ENCODE measurements at regions of chr11 and their contacts with region 1.

Region 1: GRCh38 chr11:128290106-128290840 is 297.1 kb downstream of the ETS1 start:
- DNase-seq: peak; percentile 51 to 93 (median 66)
- ATAC-seq: peak; percentile 73
- H3K4me3 ChIP-seq: peak overlapping the region; percentile 50
- H3K4me3 Mint-ChIP-seq: peak overlapping the region; percentile 90
- H3K27ac ChIP-seq: peak overlapping the region; percentile 87 to 95
- H3K27ac Mint-ChIP-seq: peak overlapping the region; percentile 100
- H3K4me1 ChIP-seq: peaks cover 77% of the 10 kb centered on the region
- H3K4me1 Mint-ChIP-seq: peaks cover 100% of the 10 kb centered on the region
- H3K27me3 ChIP-seq: no peaks in the 10 kb centered on the region
- H3K27me3 Mint-ChIP-seq: no peaks in the 10 kb centered on the region
- CTCF ChIP-seq: peak; percentile 94

Region 2: DNA sequence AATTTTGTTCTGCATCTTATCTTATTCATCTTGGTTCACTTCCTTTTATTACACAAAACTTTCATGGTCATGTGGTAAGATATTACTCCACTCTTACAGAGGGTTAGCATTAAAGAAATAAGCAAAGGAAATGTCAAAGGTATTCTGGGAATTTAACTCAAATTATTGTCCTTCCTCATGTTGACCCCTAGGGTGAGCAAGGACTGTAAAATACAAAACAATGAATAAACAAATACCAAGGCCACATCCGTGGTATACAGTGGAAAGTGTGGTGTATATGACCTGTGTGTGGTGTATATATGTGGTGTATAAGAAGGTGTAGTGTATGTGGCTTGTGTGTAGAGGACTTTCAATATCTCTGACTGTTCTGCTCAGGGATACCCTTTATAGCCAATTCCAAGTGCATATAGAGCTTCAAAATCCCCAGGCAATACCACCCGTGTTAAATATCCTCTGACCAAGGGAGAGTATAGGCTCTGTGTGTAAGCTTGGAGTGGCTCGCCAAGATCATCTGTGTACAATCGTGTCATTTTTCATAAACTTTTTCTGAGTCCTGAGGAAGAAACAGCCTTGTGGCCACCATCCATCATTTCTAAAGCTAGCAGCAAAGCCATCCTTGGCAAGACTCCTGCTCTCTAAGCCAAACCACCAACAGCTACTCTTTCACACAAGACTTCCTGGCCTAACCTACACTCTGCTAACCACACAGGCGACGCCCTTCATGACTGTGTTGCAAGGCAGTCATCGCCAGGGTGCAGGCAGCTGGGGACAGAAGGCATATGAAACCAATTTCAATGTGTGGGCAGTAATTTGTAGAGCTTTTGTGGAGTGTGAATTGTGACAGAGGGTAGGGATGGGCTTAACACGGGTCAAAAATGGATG is 250.9 kb before region 1 on chr11:
- CTCF ChIA-PET with region 1: no interaction called
- POLR2A ChIA-PET with region 1: no interaction called
- intact Hi-C with region 1: loop called (anchors 5 kb)
- DNase-seq: peak; percentile 55 to 94 (median 72)
- ATAC-seq: peak; percentile 96
- H3K4me3 ChIP-seq: peak overlapping the region; percentile 47
- H3K4me3 Mint-ChIP-seq: peak overlapping the region; percentile 72
- H3K27ac ChIP-seq: peak overlapping the region; percentile 29 to 50
- H3K27ac Mint-ChIP-seq: no peak overlapping the region
- H3K4me1 ChIP-seq: peaks cover 64% of the 10 kb centered on the region
- H3K4me1 Mint-ChIP-seq: peaks cover 59% of the 10 kb centered on the region
- H3K27me3 ChIP-seq: no peaks in the 10 kb centered on the region
- H3K27me3 Mint-ChIP-seq: no peaks in the 10 kb centered on the region
- CTCF ChIP-seq: peak; percentile 8

Region 3: DNA sequence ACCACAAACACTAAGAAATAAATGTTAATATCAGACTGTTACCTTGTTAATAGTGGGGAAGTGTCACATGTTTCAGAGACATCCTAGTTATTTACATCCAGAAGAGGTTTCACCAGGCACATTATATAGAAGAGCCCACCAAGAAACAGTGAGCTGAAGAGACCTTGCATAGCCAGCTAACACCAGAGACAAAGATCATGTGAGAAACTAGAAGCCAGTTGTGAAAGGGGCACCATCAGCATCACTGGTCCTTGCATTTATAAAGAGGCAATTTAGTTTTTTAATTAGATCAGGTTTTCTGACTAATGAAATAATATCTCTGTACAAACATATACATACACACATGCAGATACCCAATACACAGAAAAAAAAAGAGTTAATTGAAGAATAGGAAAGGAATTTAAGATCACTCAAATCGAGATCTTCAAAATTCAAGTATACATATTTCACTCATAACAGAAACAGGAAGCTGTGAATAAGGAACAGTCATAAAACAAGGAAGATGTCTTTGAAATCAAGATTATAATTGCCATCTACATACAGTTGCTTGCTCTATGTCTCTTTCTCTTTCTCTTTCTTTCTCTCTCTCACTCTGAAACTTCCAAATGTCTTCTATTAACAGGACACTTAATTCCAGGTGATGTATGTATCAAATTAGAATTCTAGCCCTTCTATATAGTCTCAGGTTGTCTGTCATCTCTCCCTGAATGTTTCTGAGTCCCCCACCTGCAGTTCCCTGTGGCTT is 51.6 kb before region 1 on chr11:
- CTCF ChIA-PET with region 1: no interaction called
- POLR2A ChIA-PET with region 1: no interaction called
- intact Hi-C with region 1: no loop called
- DNase-seq: peak in 2 of 14 experiments; percentile 9 to 18
- ATAC-seq: no peak
- H3K4me3 ChIP-seq: no peak overlapping the region
- H3K4me3 Mint-ChIP-seq: peak overlapping the region; percentile 6
- H3K27ac ChIP-seq: no peak overlapping the region
- H3K27ac Mint-ChIP-seq: peak overlapping the region; percentile 22
- H3K4me1 ChIP-seq: no peaks in the 10 kb centered on the region
- H3K4me1 Mint-ChIP-seq: peaks cover 14% of the 10 kb centered on the region
- H3K27me3 ChIP-seq: no peaks in the 10 kb centered on the region
- H3K27me3 Mint-ChIP-seq: no peaks in the 10 kb centered on the region
- CTCF ChIP-seq: no peak

Region 4: GRCh38 chr11:128251140-128251539 is 39.1 kb before region 1 on chr11:
- CTCF ChIA-PET with region 1: no interaction called
- POLR2A ChIA-PET with region 1: no interaction called
- intact Hi-C with region 1: no loop called
- DNase-seq: no peak
- ATAC-seq: no peak
- H3K4me3 ChIP-seq: no peak overlapping the region
- H3K4me3 Mint-ChIP-seq: no peak overlapping the region
- H3K27ac ChIP-seq: no peak overlapping the region
- H3K27ac Mint-ChIP-seq: no peak overlapping the region
- H3K4me1 ChIP-seq: no peaks in the 10 kb centered on the region
- H3K4me1 Mint-ChIP-seq: no peaks in the 10 kb centered on the region
- H3K27me3 ChIP-seq: no peaks in the 10 kb centered on the region
- H3K27me3 Mint-ChIP-seq: no peaks in the 10 kb centered on the region
- CTCF ChIP-seq: no peak

Region 5: GRCh38 chr11:128302425-128303186 is 12.3 kb after region 1 on chr11:
- CTCF ChIA-PET with region 1: interaction called, 51 read pairs
- POLR2A ChIA-PET with region 1: interaction called, 85 read pairs
- intact Hi-C with region 1: loop called (anchors 1 kb)
- DNase-seq: peak; percentile 49 to 97 (median 65)
- ATAC-seq: peak; percentile 85
- H3K4me3 ChIP-seq: peak overlapping the region; percentile 65
- H3K4me3 Mint-ChIP-seq: peak overlapping the region; percentile 94
- H3K27ac ChIP-seq: peak overlapping the region; percentile 90 to 94
- H3K27ac Mint-ChIP-seq: peak overlapping the region; percentile 100
- H3K4me1 ChIP-seq: peaks cover 82% of the 10 kb centered on the region
- H3K4me1 Mint-ChIP-seq: peaks cover 98% of the 10 kb centered on the region
- H3K27me3 ChIP-seq: no peaks in the 10 kb centered on the region
- H3K27me3 Mint-ChIP-seq: no peaks in the 10 kb centered on the region
- CTCF ChIP-seq: peak; percentile 46

Region 6: GRCh38 chr11:128342511-128343134 is 52.4 kb after region 1 on chr11:
- CTCF ChIA-PET with region 1: interaction called, 7 read pairs
- POLR2A ChIA-PET with region 1: interaction called, 5 read pairs
- intact Hi-C with region 1: loop called in 1 of 2 experiments (anchors 1 kb)
- DNase-seq: peak in 11 of 14 experiments; percentile 24 to 83 (median 67)
- ATAC-seq: peak; percentile 67
- H3K4me3 ChIP-seq: no peak overlapping the region
- H3K4me3 Mint-ChIP-seq: peak overlapping the region; percentile 73
- H3K27ac ChIP-seq: peak overlapping the region; percentile 79 to 88
- H3K27ac Mint-ChIP-seq: peak overlapping the region; percentile 99
- H3K4me1 ChIP-seq: peaks cover 65% of the 10 kb centered on the region
- H3K4me1 Mint-ChIP-seq: peaks cover 97% of the 10 kb centered on the region
- H3K27me3 ChIP-seq: no peaks in the 10 kb centered on the region
- H3K27me3 Mint-ChIP-seq: no peaks in the 10 kb centered on the region
- CTCF ChIP-seq: no peak

Region 7: DNA sequence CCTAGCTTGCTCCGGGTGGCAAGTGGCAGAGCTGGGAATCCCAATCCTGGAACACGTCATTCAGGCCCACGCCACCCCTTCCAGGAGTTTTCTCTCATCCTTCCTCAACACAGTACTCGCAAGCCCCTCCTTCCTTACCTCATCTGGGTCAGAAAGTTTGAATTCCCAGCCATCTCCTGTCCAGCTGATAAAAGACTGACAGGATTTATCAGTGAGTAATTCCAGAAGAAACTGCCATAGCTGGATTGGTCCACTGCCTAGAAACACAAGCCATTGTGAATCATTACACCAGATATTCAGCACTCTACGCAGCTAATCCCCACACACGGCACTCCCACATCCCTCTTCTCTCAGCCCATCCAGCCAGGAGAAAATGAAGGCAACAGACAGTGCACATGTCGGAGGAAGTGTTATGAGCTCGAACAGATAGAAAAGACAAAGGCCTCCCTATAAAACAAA is 173.1 kb after region 1 on chr11:
- CTCF ChIA-PET with region 1: interaction called, 10 read pairs
- POLR2A ChIA-PET with region 1: interaction called, 212 read pairs
- intact Hi-C with region 1: loop called (anchors 2 kb)
- DNase-seq: peak in 2 of 14 experiments; percentile 3 to 17
- ATAC-seq: no peak
- H3K4me3 ChIP-seq: no peak overlapping the region
- H3K4me3 Mint-ChIP-seq: peak overlapping the region; percentile 82
- H3K27ac ChIP-seq: peak overlapping the region; percentile 92 to 94
- H3K27ac Mint-ChIP-seq: peak overlapping the region; percentile 99
- H3K4me1 ChIP-seq: peaks cover 73% of the 10 kb centered on the region
- H3K4me1 Mint-ChIP-seq: peaks cover 96% of the 10 kb centered on the region
- H3K27me3 ChIP-seq: no peaks in the 10 kb centered on the region
- H3K27me3 Mint-ChIP-seq: no peaks in the 10 kb centered on the region
- CTCF ChIP-seq: no peak

Region 8: DNA sequence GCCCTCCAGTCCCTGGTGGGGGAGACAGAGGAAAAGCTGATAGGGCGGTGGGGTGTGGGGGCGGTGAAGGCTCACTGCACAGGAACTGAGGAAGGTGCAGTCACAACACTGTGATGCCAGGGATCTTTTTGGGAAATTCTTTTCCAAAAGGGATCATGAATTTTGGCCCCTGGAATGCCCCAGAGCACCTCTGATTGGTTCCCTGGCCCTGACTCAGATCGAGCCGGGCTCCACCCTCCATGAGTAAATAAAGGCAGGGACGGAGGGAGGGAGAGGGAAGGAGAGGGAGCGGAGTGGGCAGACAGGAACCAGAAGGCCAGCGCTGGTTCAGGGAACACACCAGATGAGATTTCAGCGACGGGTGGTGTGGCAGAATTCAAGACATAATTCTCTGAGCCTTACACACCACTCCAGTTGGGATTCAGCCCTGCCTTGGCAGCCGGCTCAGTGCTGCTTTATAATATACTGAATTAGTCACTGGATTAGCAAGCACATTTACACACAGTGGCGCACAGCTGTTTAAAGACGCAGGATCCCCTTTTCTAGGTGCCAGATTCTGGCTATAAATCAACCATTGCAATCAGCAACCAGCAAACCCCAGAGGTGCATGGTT is 216.8 kb after region 1 on chr11:
- CTCF ChIA-PET with region 1: interaction called, 16 read pairs
- POLR2A ChIA-PET with region 1: interaction called, 129 read pairs
- intact Hi-C with region 1: loop called in 1 of 2 experiments (anchors 2 kb)
- DNase-seq: peak in 7 of 14 experiments; percentile 38 to 62 (median 53)
- ATAC-seq: peak; percentile 28
- H3K4me3 ChIP-seq: peak overlapping the region; percentile 89
- H3K4me3 Mint-ChIP-seq: peak overlapping the region; percentile 93
- H3K27ac ChIP-seq: peak overlapping the region; percentile 68 to 93
- H3K27ac Mint-ChIP-seq: peak overlapping the region; percentile 99
- H3K4me1 ChIP-seq: peaks cover 86% of the 10 kb centered on the region
- H3K4me1 Mint-ChIP-seq: peaks cover 100% of the 10 kb centered on the region
- H3K27me3 ChIP-seq: no peaks in the 10 kb centered on the region
- H3K27me3 Mint-ChIP-seq: no peaks in the 10 kb centered on the region
- CTCF ChIP-seq: no peak

Region 9: GRCh38 chr11:128624269-128625175 is 334.2 kb after region 1 on chr11:
- CTCF ChIA-PET with region 1: interaction called, 35 read pairs
- POLR2A ChIA-PET with region 1: interaction called, 38 read pairs
- intact Hi-C with region 1: no loop called
- DNase-seq: peak; percentile 38 to 89 (median 68)
- ATAC-seq: peak; percentile 69
- H3K4me3 ChIP-seq: peak overlapping the region; percentile 4
- H3K4me3 Mint-ChIP-seq: peak overlapping the region; percentile 80
- H3K27ac ChIP-seq: peak overlapping the region; percentile 78
- H3K27ac Mint-ChIP-seq: peak overlapping the region; percentile 97
- H3K4me1 ChIP-seq: peaks cover 88% of the 10 kb centered on the region
- H3K4me1 Mint-ChIP-seq: peaks cover 98% of the 10 kb centered on the region
- H3K27me3 ChIP-seq: no peaks in the 10 kb centered on the region
- H3K27me3 Mint-ChIP-seq: no peaks in the 10 kb centered on the region
- CTCF ChIP-seq: no peak